ENCODE measurements at regions of chr10 and their contacts with region 1.

Region 1: DNA sequence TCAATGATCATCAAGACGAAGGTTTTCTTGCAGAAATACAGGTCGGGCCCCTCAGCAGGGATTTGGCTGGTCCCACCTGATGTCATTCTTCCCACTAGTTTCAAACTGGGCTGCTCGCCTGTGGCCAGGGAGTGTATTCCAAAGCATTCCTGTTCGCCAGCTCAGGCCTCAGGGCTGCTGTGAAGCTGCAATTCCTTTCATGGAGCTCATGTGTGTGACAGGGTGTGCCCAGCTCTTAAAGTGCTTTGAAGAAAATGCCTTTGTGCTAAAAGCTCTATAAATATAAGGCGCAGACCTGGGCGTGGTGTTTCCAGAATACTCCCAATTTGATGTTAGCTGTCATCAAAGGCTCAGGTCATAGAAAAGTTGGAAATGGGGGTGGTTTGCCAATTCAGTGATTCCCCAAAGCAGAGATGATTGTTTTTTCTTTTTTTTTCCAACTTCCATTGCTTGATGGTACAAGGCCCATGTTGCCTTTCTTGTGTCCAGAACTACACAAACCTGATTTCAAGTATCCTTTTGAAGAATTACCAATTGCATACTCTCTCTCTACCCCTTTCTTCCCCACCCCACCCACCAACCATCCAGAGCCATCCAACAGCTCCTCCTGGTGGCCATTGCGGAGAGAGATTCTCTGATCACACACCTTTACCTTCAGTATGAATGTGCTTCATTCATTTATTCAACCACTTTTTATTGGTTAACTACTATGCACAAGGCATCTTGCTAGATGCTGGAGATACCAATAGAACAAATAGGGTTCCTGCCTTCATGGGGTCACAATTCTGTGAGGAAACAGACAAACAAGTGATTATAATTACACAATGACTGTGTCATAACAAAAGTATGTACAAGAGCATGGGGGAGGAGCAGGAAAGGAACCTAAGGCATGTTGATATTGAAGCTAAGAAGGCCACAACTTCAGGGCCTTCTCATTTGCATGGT is 297.3 kb upstream of the LYZL1 start:
- DNase-seq: peak; percentile 60
- H3K4me3 Mint-ChIP-seq: no peak overlapping the region
- H3K27ac Mint-ChIP-seq: no peak overlapping the region
- H3K4me1 Mint-ChIP-seq: no peaks in the 10 kb centered on the region
- H3K27me3 Mint-ChIP-seq: peaks cover 8% of the 10 kb centered on the region

Region 2: GRCh38 chr10:28734941-28735759 is 256.4 kb before region 1 on chr10:
- CTCF ChIA-PET with region 1: no interaction called
- intact Hi-C with region 1: no loop called
- DNase-seq: no peak
- H3K4me3 Mint-ChIP-seq: no peak overlapping the region
- H3K27ac Mint-ChIP-seq: no peak overlapping the region
- H3K4me1 Mint-ChIP-seq: peaks cover 3% of the 10 kb centered on the region
- H3K27me3 Mint-ChIP-seq: peaks cover 10% of the 10 kb centered on the region

Region 3: DNA sequence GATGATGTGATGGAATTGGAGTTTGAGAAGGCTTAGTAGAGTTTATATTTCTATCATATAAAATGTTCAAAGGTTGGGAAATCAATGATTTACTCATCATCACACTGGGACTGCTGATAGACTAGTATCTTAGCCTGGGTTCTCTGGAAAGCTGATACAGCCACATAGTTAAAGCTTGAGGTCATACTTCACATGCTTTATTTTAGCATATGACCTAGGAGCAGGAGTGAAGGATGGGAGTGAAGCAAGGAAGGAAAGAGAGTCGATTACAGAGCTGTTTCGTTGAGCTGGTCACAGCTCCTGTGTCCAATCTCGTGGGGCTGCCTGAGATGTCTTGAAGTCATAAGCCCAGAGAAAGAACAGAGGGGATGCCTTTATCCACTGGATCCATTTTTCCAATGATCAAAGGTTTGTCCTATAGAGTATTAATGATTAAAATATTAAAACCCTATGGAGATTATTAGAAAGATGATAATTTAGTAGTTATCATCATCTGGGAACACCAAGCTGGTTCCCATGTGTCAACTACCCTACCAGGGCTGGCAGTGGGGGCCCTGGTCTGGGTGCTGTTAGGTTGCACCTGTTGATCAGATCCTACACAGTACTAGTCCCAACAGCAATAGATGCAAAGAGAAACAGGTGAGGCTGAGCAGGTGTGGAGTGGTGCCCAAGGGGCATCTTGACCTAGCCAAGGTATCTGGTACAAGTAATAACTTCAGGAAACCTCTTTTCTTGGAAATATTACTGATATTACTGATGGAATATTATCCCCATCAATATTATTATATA is 236.5 kb before region 1 on chr10:
- CTCF ChIA-PET with region 1: no interaction called
- intact Hi-C with region 1: no loop called
- DNase-seq: no peak
- H3K4me3 Mint-ChIP-seq: no peak overlapping the region
- H3K27ac Mint-ChIP-seq: no peak overlapping the region
- H3K4me1 Mint-ChIP-seq: no peaks in the 10 kb centered on the region
- H3K27me3 Mint-ChIP-seq: peaks cover 16% of the 10 kb centered on the region

Region 4: DNA sequence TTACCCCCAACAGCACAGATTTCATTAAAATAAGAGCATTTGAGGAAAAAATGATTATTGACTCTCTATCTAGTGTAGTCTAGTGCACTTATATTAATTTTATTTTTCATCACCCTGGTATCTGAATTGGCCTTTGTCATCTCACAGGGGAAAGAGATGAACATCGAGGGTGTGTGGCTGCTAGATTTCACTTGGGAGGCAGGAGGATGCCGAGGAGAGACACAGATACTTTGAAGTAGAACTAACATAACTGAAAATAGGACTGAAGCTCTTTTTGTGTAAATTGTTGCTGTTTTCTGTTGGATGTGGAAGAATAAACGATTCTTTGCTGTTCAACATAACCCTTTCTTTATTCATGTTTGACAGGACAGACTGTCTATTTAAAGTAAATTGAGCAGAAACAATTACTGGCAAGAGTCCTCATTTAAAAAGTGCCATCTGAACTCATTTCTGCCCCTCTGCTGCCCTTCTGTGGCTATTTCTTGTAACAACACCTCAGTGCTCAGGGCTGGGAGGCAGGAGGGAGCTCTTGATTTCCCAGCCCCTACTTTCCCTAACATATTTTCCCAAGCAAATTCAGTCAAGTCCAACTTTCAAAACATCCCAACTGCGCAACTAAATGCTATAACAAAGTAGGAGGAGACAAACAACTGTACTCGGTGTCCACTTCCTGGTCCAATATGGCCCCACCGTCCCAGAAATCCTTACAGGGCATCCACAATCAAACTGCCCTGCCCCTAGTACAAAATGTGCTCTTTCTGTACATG is 312.8 kb after region 1 on chr10:
- CTCF ChIA-PET with region 1: no interaction called
- intact Hi-C with region 1: loop called (anchors 2 kb)
- DNase-seq: peak; percentile 53
- H3K4me3 Mint-ChIP-seq: peak overlapping the region; percentile 16
- H3K27ac Mint-ChIP-seq: no peak overlapping the region
- H3K4me1 Mint-ChIP-seq: peaks cover 4% of the 10 kb centered on the region
- H3K27me3 Mint-ChIP-seq: peaks cover 33% of the 10 kb centered on the region